CD4-positive, alpha-beta memory T cell (primary cell): ENCODE measurements at regions of chr11 and their contacts with region 1.

Region 1: GRCh38 chr11:74739546-74740270 is 8.5 kb upstream of the CHRDL2 start:
- DNase-seq: peak in 4 of 5 donors; percentile 38 to 43 (median 42)
- H3K4me3 ChIP-seq: no peak overlapping the region
- H3K4me3 Mint-ChIP-seq: no peak overlapping the region
- H3K27ac ChIP-seq: no peak overlapping the region
- H3K27ac Mint-ChIP-seq: peak overlapping the region in 1 of 7 donors; percentile 9
- H3K4me1 ChIP-seq: peaks cover 5% of the 10 kb centered on the region
- H3K4me1 Mint-ChIP-seq: peaks cover 2 to 11% (median 7%) of the 10 kb centered on the region in 4 donors
- H3K27me3 ChIP-seq: no peaks in the 10 kb centered on the region
- H3K27me3 Mint-ChIP-seq: peaks cover 14 to 15% of the 10 kb centered on the region in 2 donors

Region 2: DNA sequence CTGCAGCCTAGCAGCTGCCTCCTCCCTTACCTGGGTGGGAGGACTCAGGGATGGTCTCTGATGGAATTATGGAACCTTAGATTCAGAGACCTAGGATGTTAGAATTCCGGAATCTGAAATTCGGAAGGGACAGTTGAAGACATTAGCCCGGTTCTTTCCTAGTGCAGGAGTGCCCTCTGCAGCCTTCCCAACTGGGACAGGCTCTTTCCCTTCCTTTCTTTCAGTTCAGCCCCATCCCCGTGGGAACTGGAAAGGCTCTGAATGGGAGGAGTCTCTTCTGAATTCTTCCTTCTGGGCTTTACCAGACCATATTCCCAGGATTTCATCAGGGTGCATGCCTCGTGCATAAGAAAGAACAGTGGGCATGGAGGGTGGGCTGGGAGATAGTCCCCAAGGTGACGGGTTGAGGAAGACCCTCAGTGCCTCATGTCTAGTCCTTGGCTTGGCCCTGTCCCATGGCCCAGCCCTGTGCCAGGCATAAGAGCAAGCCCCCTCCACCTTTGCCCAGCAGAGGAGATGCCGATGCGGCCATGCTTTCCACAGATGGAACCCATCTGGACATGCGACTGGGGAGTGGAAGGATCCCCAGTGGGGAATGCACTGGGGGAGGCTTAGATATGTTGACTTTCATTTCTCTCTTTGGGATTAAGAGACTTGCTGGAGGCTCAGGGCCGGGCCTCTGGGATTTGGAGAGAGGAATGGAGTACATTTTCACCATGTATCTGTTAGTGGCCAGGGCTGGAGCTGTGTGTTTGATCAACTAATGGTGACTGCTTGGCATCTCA is 774.4 kb before region 1 on chr11:
- CTCF ChIA-PET with region 1: no interaction called
- POLR2A ChIA-PET with region 1: no interaction called
- intact Hi-C with region 1: no loop called
- DNase-seq: no peak
- H3K4me3 ChIP-seq: no peak overlapping the region
- H3K4me3 Mint-ChIP-seq: peak overlapping the region in 1 of 8 donors; percentile 52
- H3K27ac ChIP-seq: no peak overlapping the region
- H3K27ac Mint-ChIP-seq: peak overlapping the region in 4 of 7 donors; percentile 37 to 48 (median 41)
- H3K4me1 ChIP-seq: peaks cover 45% of the 10 kb centered on the region
- H3K4me1 Mint-ChIP-seq: peaks cover 30 to 54% (median 39%) of the 10 kb centered on the region in 4 donors
- H3K27me3 ChIP-seq: no peaks in the 10 kb centered on the region
- H3K27me3 Mint-ChIP-seq: no peaks in the 10 kb centered on the region

Region 3: GRCh38 chr11:74147199-74147929 is 592.3 kb before region 1 on chr11:
- CTCF ChIA-PET with region 1: no interaction called
- POLR2A ChIA-PET with region 1: no interaction called
- intact Hi-C with region 1: no loop called
- DNase-seq: no peak
- H3K4me3 ChIP-seq: no peak overlapping the region
- H3K4me3 Mint-ChIP-seq: no peak overlapping the region
- H3K27ac ChIP-seq: no peak overlapping the region
- H3K27ac Mint-ChIP-seq: no peak overlapping the region
- H3K4me1 ChIP-seq: no peaks in the 10 kb centered on the region
- H3K4me1 Mint-ChIP-seq: peaks cover 4 to 9% (median 7%) of the 10 kb centered on the region in 4 donors
- H3K27me3 ChIP-seq: no peaks in the 10 kb centered on the region
- H3K27me3 Mint-ChIP-seq: no peaks in the 10 kb centered on the region

Region 4: GRCh38 chr11:74726547-74727182 is 13.0 kb before region 1 on chr11:
- CTCF ChIA-PET with region 1: interaction called, 66 read pairs
- POLR2A ChIA-PET with region 1: no interaction called
- intact Hi-C with region 1: no loop called
- DNase-seq: peak; percentile 37 to 54 (median 52)
- H3K4me3 ChIP-seq: no peak overlapping the region
- H3K4me3 Mint-ChIP-seq: no peak overlapping the region
- H3K27ac ChIP-seq: no peak overlapping the region
- H3K27ac Mint-ChIP-seq: no peak overlapping the region
- H3K4me1 ChIP-seq: peaks cover 7% of the 10 kb centered on the region
- H3K4me1 Mint-ChIP-seq: peaks cover 3 to 12% (median 8%) of the 10 kb centered on the region in 4 donors
- H3K27me3 ChIP-seq: no peaks in the 10 kb centered on the region
- H3K27me3 Mint-ChIP-seq: peaks cover 14 to 23% of the 10 kb centered on the region in 2 donors